ENCODE measurements at regions of chr7 and their contacts with region 1.

Region 1: DNA sequence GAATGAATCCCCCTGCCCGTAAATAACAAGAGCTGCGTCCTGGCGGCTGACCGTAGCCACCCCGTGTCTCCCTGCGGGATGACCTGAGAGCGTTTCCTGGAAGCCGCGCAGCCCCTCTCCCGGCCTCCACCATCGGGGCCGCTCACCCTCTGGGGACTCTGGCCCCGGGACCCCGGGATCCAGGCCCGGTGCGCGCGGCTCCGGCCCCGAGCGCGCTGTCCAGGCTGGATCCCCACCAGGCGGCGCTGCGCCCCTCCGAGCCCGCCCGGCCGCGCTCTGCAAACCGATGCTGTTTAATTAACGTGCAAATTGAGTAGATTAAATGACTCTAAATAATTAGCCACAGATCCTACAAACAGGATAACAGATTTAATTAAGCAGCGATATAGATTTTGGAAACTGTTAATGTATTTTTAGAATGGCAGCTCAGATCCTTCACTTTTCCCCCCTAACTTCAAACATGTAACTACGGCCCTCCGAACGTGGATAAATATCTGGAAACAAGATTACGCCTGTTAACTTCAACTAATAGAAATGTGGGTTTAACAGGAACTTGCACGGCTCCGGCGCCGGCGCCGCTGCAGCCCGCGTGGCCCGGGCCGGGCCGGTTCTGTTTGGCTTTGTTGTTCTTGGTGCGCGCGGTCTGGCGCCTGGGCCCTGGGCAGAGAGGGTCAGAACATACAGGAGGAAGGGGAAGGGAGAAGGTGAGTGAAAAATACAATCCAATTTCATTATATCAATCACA is 7.1 kb upstream of the UNCX start:
- DNase-seq: no peak
- H3K4me3 ChIP-seq: no peak overlapping the region
- H3K27me3 ChIP-seq: peaks cover 54% of the 10 kb centered on the region
- CTCF ChIP-seq: peak; percentile 50

Region 2: DNA sequence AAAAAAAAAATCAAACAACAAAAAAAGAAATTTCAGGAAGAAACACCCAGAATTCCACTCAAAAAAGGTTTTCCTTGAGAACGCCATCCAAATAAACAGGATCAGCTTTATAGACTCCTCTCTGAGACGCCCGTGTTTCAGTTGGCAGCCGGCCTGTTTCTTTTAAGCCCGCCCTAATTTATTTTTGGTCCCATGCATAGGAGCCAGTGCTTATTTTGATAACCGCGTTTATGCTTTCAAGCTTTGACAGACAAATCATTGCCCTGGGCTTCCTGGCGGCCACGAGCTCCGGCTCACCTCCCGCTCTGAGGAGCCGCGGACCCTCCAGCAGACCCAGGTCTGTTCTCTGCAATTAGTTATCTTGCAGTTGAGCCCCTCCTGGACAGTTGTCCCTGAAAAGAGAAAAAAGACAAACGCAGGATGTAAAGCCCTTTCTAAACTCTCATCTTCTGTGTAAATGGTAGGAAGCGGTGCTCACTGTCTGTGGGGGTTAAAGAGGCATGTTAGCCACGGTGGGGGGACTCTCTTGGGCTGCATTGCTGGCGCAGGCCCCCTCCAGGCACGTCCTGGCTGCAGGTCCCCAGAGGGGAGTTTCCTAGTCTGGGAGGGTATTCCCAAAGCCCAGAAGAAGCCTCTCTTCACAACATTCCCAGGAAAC is 15.2 kb before region 1 on chr7:
- CTCF ChIA-PET with region 1: interaction called, 15 read pairs
- POLR2A ChIA-PET with region 1: no interaction called
- DNase-seq: no peak
- H3K4me3 ChIP-seq: no peak overlapping the region
- H3K27me3 ChIP-seq: peaks cover 35% of the 10 kb centered on the region
- CTCF ChIP-seq: no peak

Region 3: GRCh38 chr7:1412322-1413261 is 187.0 kb after region 1 on chr7:
- CTCF ChIA-PET with region 1: interaction called, 12 read pairs
- POLR2A ChIA-PET with region 1: no interaction called
- DNase-seq: no peak
- H3K4me3 ChIP-seq: no peak overlapping the region
- H3K27me3 ChIP-seq: peaks cover 4% of the 10 kb centered on the region
- CTCF ChIP-seq: peak; percentile 49

Region 4: DNA sequence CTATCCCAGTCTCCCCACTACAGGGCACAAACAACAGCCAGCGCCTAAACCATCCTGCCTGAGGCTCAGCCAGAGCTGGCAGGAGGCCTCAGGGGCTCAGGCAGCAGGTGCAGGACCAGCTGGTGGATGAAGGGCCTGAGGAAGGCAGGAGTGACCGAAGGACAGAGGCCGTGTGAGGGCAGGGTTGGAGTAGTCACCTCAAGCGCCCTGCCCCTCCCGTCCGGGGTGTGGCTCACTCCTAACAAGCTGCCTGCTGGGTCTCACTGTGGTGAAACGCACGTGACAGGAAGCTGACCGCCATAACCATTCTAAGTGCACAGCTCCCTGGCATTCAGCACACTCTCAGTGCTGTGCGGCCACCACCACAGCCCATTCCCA is 725.5 kb after region 1 on chr7:
- CTCF ChIA-PET with region 1: no interaction called
- POLR2A ChIA-PET with region 1: no interaction called
- DNase-seq: no peak
- H3K4me3 ChIP-seq: no peak overlapping the region
- H3K27me3 ChIP-seq: no peaks in the 10 kb centered on the region
- CTCF ChIP-seq: no peak

Measured in BJ (cell line).